ENCODE measurements at regions of chr19 and their contacts with region 1.

Region 1: GRCh38 chr19:46471116-46471733 is at the start of gene PNMA8A:
- DNase-seq: peak; percentile 55 to 93
- H3K4me3 ChIP-seq: peak within 1 kb of the TSS; percentile 56 to 61
- H3K27ac ChIP-seq: peak within 1 kb of the TSS; percentile 94 to 96
- H3K4me1 ChIP-seq: peaks cover 8 to 45% of the 10 kb centered on the region in 2 donors
- H3K27me3 ChIP-seq: no peaks in the 10 kb centered on the region
- CTCF ChIP-seq: peak in 1 of 3 experiments; percentile 14
- total RNA-seq, gene PNMA8A: 0.53 TPM

Region 2: DNA sequence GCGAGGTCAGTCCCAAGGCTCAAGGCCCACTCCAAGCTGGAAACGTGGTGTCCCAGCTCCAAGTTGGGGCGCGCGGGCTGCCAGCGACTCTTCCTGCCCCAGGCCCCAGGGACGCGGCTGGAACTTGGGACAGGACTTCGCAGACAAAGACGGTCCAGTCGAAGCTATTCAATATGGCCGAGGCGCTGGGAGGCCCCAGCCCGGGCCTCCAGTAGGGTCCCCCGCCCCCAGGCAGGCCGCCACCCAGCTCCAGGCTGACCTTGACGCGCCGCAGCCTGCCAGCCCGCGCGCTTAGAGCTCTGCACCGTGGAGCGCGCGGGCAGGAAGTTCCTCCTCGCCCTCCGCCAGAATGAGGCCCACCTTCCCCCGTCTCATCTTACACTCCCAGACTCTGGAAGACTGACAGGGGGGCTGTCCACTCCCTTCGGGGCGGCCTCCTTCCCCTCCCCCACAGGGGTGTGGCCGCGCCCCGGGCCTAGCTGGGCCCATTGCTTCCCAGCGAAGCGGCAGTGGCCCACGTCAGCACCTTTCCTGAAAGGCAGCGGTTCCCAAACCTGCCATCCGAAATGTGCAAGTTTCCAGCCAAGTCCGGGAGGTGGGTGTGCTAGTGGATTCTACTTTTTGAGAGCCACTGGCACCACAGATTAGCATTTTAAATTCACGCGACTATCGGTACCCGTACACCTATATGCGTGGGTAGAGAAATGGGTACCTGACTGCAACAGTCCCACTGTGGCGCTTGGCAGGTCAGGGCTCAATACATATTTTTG is 57.8 kb before region 1 on chr19 and contains the start of gene CCDC8:
- intact Hi-C with region 1: loop called (anchors 5 kb)
- DNase-seq: peak in 1 of 2 donors; percentile 92
- H3K4me3 ChIP-seq: peak within 1 kb of the TSS; percentile 63 to 75
- H3K27ac ChIP-seq: peak within 1 kb of the TSS; percentile 69 to 83
- H3K4me1 ChIP-seq: peaks cover 11 to 34% of the 10 kb centered on the region in 2 donors
- H3K27me3 ChIP-seq: no peaks in the 10 kb centered on the region
- CTCF ChIP-seq: no peak
- total RNA-seq, gene CCDC8: 10.0 TPM

Region 3: DNA sequence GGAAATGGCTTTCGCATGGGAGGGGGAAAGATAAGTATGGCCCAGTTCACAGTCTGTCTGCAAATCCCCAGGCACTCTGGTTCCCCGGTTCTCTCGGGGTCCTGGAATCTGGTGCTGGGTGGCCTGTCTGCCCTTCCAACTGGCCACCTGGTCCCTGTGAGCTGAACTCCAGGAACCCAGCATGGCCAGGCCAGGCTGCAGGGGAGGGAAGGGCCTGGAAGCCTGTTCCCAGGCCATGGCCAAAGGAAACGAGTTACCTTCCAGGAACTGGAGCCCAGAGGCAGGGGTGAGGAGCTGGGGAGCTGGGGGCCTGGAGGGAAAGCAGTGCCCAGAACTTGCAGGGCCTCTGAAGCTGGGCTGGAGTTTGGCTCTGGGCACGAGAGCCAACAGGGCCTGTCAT is 23.4 kb before region 1 on chr19:
- intact Hi-C with region 1: loop called (anchors 2 kb)
- DNase-seq: peak in 1 of 2 donors; percentile 25
- H3K4me3 ChIP-seq: no peak overlapping the region
- H3K27ac ChIP-seq: peak overlapping the region; percentile 79 to 85
- H3K4me1 ChIP-seq: peaks cover 2 to 17% of the 10 kb centered on the region in 2 donors
- H3K27me3 ChIP-seq: no peaks in the 10 kb centered on the region
- CTCF ChIP-seq: no peak

Region 4: GRCh38 chr19:46555628-46556280 is 84.5 kb after region 1 on chr19:
- intact Hi-C with region 1: no loop called
- DNase-seq: no peak
- H3K4me3 ChIP-seq: no peak overlapping the region
- H3K27ac ChIP-seq: no peak overlapping the region
- H3K4me1 ChIP-seq: no peaks in the 10 kb centered on the region
- H3K27me3 ChIP-seq: no peaks in the 10 kb centered on the region
- CTCF ChIP-seq: no peak

Region 5: DNA sequence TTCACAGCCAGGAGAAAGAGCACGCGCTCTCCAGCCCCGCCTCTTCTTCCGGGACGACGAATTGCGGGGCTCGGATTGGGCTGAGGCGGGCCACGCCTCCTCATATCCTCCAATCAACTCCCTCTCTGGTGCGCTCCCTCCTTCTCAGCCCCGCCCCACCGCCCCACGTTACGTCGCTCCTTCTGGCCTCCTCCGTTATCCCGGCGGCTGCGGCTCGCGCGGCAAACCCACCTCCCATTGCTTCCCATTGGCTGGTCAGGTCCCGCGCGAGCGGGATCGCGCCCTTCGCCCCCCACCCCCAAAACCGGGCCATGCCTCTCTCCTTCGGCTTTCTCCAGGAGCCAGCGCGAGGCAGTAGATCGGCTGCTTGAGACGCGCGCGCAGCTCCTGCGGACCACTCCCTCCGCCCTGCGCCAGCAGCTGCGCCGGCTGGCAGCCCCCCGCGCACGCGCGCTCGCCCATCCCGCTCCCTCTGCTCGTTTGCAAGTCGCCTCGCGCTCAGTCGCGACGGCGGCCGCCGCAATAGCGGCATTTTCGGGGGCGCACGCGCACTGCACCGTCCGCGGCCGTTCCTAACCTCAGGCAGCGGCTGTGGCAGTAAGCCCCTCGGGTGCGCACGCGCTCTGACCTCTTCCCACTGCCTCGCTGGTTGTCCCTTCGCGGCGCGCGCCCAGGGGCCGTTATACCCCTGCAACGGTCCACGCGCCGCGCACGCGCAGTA is 389.1 kb after region 1 on chr19:
- intact Hi-C with region 1: no loop called
- DNase-seq: peak; percentile 94 to 99
- H3K4me3 ChIP-seq: peak overlapping the region; percentile 85 to 87
- H3K27ac ChIP-seq: peak overlapping the region; percentile 97 to 100
- H3K4me1 ChIP-seq: peaks cover 12 to 32% of the 10 kb centered on the region in 2 donors
- H3K27me3 ChIP-seq: no peaks in the 10 kb centered on the region
- CTCF ChIP-seq: no peak

Measured in ascending aorta (tissue), 2 donors.